ENCODE measurements at regions of chr1 and their contacts with region 1.

Region 1: GRCh38 chr1:150186789-150187559 is 37.3 kb downstream of the PLEKHO1 start:
- DNase-seq: peak; percentile 53 to 62
- ATAC-seq: peak; percentile 85 to 87
- H3K4me3 ChIP-seq: peak overlapping the region; percentile 10; the same call in 1 of the 3 replicates
- H3K27ac ChIP-seq: peak overlapping the region; percentile 28 to 73; a peak in 4 of 6 replicates
- H3K4me1 ChIP-seq: peaks cover 18% of the 10 kb centered on the region
- CTCF ChIP-seq: peak; percentile 91
- EP300 ChIP-seq: no peak
- POLR2A ChIP-seq: no peak
- RAD21 ChIP-seq: peak; percentile 83 to 89

Region 2: GRCh38 chr1:149886396-149887195 is 300.4 kb before region 1 on chr1:
- CTCF ChIA-PET with region 1: interaction called, 32 read pairs
- POLR2A ChIA-PET with region 1: interaction called, 43 read pairs
- DNase-seq: peak; percentile 93 to 99
- ATAC-seq: peak; percentile 59 to 74
- H3K4me3 ChIP-seq: peak overlapping the region; percentile 54
- H3K27ac ChIP-seq: peak overlapping the region; percentile 91 to 96
- H3K4me1 ChIP-seq: peaks cover 22% of the 10 kb centered on the region
- CTCF ChIP-seq: no peak
- EP300 ChIP-seq: no peak
- POLR2A ChIP-seq: peak; percentile 95
- RAD21 ChIP-seq: 0 out of 5 replicates have a peak, but pooled peaks of 1 of the 2 experiments have one; percentile 6

Region 3: GRCh38 chr1:150010393-150011115 is 176.4 kb before region 1 on chr1 and contains the start of gene OTUD7B:
- CTCF ChIA-PET with region 1: interaction called, 11 read pairs
- POLR2A ChIA-PET with region 1: no interaction called
- DNase-seq: peak; percentile 69 to 89
- ATAC-seq: peak; percentile 93 to 94
- H3K4me3 ChIP-seq: peak within 1 kb of the TSS; percentile 59
- H3K27ac ChIP-seq: peak within 1 kb of the TSS; percentile 88 to 96
- H3K4me1 ChIP-seq: peaks cover 29% of the 10 kb centered on the region
- CTCF ChIP-seq: no peak; the same call in 2 of the 3 replicates
- EP300 ChIP-seq: no peak
- POLR2A ChIP-seq: peak; percentile 72
- RAD21 ChIP-seq: peak in 1 of 2 experiments; percentile 25; a peak in 2 of 5 replicates
- polyA plus RNA-seq, gene OTUD7B: 12.1 and 13.0 TPM in 2 replicates

Region 4: DNA sequence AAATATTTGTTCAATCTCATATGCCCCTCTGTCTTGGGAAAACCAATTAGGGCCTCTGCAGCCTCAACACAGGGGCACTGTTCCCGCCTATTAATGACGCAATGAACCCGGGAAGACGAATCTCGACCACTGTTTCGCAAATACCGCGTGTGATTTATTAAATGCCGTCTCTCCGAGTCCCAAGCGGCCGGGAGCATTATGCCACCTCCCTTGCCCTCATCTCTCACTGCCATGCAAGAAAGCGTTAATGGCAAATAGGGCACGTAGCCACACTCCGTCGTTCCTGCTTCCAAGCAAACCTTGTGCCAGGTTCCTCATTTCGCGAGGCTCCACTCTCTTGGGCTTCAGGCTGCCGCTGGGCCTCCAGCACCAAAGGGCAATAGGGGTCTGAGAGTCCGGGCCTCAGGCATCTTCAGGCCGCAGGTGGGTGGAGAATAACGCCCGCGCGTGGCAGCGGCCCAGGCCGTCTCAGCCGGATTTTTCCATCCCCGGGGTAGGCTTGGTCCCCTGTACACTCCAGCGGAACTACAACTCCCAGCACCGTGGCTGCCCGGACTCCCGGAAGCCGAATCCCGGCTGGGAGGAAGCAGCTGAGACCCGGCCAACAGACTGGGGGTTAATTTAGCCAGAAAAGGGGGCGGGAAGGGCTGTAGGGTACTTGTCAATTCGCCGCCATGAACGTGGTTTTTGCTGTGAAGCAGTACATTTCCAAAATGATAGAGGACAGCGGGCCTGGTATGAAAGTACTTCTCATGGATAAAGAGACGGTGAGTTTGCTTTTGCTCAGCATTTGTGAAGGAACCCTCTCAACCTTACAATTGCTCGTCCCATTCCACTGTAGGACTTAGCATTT is 119.6 kb before region 1 on chr1 and contains the start of gene VPS45:
- CTCF ChIA-PET with region 1: interaction called, 75 read pairs
- POLR2A ChIA-PET with region 1: interaction called, 4 read pairs
- DNase-seq: peak; percentile 92 to 93
- ATAC-seq: peak; percentile 98 to 99
- H3K4me3 ChIP-seq: peak within 1 kb of the TSS; percentile 80
- H3K27ac ChIP-seq: peak within 1 kb of the TSS; percentile 92 to 96
- H3K4me1 ChIP-seq: peaks cover 18% of the 10 kb centered on the region
- CTCF ChIP-seq: no peak
- EP300 ChIP-seq: no peak
- POLR2A ChIP-seq: peak; percentile 39; the same call in 1 of the 2 replicates
- RAD21 ChIP-seq: peak in 1 of 2 experiments; percentile 6; a peak in 1 of 5 replicates
- polyA plus RNA-seq, gene VPS45: 45.0 and 49.7 TPM in 2 replicates

Region 5: GRCh38 chr1:150162862-150163706 is 23.9 kb before region 1 on chr1:
- CTCF ChIA-PET with region 1: interaction called, 52 read pairs
- POLR2A ChIA-PET with region 1: no interaction called
- DNase-seq: peak in 1 of 2 experiments; percentile 49
- ATAC-seq: peak; percentile 18 to 58; a peak in 3 of 6 replicates
- H3K4me3 ChIP-seq: no peak overlapping the region
- H3K27ac ChIP-seq: no peak overlapping the region
- H3K4me1 ChIP-seq: no peaks in the 10 kb centered on the region
- CTCF ChIP-seq: no peak
- EP300 ChIP-seq: no peak
- POLR2A ChIP-seq: no peak
- RAD21 ChIP-seq: no peak

Region 6: GRCh38 chr1:150176593-150176992 is 10.4 kb before region 1 on chr1:
- CTCF ChIA-PET with region 1: interaction called, 73 read pairs
- POLR2A ChIA-PET with region 1: no interaction called
- DNase-seq: no peak
- ATAC-seq: no peak
- H3K4me3 ChIP-seq: no peak overlapping the region
- H3K27ac ChIP-seq: no peak overlapping the region
- H3K4me1 ChIP-seq: no peaks in the 10 kb centered on the region
- CTCF ChIP-seq: no peak
- EP300 ChIP-seq: no peak
- POLR2A ChIP-seq: no peak
- RAD21 ChIP-seq: no peak

Region 7: DNA sequence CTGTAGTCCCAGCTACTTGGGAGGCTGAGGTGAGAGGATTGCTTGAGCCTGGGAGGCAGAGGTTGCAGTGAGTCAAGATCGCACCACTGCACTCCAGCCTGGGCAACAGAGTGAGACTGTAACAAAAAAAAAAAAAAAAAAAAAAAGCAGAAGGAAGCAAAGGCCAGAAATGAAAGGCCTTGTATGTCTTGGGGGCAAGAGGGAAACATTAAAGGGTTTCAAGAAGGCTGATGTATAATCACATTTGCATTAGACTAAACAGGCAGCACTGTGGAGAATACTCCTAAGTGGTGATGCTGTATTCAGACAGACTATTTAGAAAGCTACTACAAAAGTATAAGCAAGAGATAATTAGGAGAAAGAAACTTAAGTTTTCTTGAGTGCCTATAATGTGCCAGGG is 38.6 kb after region 1 on chr1:
- CTCF ChIA-PET with region 1: interaction called, 14 read pairs
- POLR2A ChIA-PET with region 1: no interaction called
- DNase-seq: no peak
- ATAC-seq: no peak
- H3K4me3 ChIP-seq: no peak overlapping the region
- H3K27ac ChIP-seq: no peak overlapping the region
- H3K4me1 ChIP-seq: no peaks in the 10 kb centered on the region
- CTCF ChIP-seq: no peak
- EP300 ChIP-seq: no peak
- POLR2A ChIP-seq: no peak
- RAD21 ChIP-seq: no peak

Measured in A549 (cell line).